ENCODE measurements at regions of chr12 and their contacts with region 1.

Region 1: GRCh38 chr12:21607701-21608100 is 3.1 kb upstream of the GYS2 start:
- DNase-seq: peak in 1 of 2 experiments; percentile 40
- H3K4me3 ChIP-seq: no peak overlapping the region
- H3K4me3 Mint-ChIP-seq: no peak overlapping the region
- H3K27ac Mint-ChIP-seq: no peak overlapping the region
- H3K4me1 ChIP-seq: peaks cover 23% of the 10 kb centered on the region
- H3K4me1 Mint-ChIP-seq: peaks cover 7% of the 10 kb centered on the region
- H3K27me3 ChIP-seq: no peaks in the 10 kb centered on the region
- H3K27me3 Mint-ChIP-seq: no peaks in the 10 kb centered on the region
- CTCF ChIP-seq: peak; percentile 48 to 49

Region 2: DNA sequence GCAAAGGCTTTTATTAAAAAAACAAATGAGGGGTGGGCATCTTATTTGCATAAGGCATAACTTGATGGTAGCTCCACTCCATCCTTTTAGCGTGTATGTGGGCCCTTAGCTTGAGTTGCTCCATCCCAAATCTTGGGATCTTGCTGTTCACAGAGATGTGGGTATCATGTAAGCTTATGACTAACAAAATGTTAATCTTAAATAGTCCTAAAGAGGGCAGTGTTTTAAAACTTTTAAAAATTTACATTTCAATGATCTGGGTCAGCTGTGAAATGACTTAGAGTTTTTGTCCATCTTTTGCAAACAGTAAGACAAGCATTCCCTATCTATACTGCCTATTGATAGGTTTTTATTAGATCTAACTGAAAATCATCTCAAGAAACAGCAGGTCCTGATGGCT is 359.0 kb before region 1 on chr12:
- CTCF ChIA-PET with region 1: no interaction called
- POLR2A ChIA-PET with region 1: no interaction called
- intact Hi-C with region 1: loop called (anchors 10 kb)
- DNase-seq: no peak
- H3K4me3 ChIP-seq: no peak overlapping the region
- H3K4me3 Mint-ChIP-seq: no peak overlapping the region
- H3K27ac Mint-ChIP-seq: no peak overlapping the region
- H3K4me1 ChIP-seq: no peaks in the 10 kb centered on the region
- H3K4me1 Mint-ChIP-seq: no peaks in the 10 kb centered on the region
- H3K27me3 ChIP-seq: no peaks in the 10 kb centered on the region
- H3K27me3 Mint-ChIP-seq: peaks cover 7% of the 10 kb centered on the region
- CTCF ChIP-seq: peak in 1 of 2 experiments; percentile 39

Region 3: GRCh38 chr12:21580748-21581516 is 26.8 kb before region 1 on chr12:
- CTCF ChIA-PET with region 1: no interaction called
- POLR2A ChIA-PET with region 1: no interaction called
- intact Hi-C with region 1: loop called (anchors 2 kb)
- DNase-seq: no peak
- H3K4me3 ChIP-seq: no peak overlapping the region
- H3K4me3 Mint-ChIP-seq: no peak overlapping the region
- H3K27ac Mint-ChIP-seq: peak overlapping the region; percentile 0
- H3K4me1 ChIP-seq: peaks cover 62% of the 10 kb centered on the region
- H3K4me1 Mint-ChIP-seq: peaks cover 57% of the 10 kb centered on the region
- H3K27me3 ChIP-seq: no peaks in the 10 kb centered on the region
- H3K27me3 Mint-ChIP-seq: no peaks in the 10 kb centered on the region
- CTCF ChIP-seq: no peak

Region 4: DNA sequence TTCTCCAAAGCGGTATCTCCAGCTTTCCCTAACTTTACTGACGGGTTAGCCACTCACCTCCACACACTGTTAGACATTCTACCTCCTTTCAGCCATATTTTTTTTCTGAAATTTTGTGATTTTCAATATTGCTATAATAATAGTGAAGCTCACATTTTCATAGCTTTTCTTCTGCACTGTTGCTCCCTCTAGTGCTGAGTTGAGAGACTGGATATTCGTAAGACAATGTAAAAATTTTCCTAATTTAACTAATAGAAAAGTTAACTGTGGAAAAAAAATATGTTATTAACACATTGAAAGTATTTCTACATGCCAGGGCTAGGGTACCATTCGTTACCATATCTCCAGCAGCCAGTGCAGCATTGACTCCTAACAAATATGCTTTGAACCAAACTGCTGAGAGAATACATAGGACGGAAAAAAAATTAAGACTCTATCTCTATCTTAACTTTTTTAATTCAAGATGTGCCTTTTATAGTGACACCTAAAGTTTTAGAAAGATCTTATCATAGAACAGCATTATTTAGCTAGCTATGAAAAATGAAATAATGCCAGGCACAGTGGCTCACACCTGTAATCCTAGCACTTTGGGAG is 382.2 kb after region 1 on chr12:
- CTCF ChIA-PET with region 1: no interaction called
- POLR2A ChIA-PET with region 1: no interaction called
- intact Hi-C with region 1: loop called (anchors 5 kb)
- DNase-seq: peak in 1 of 2 experiments; percentile 46
- H3K4me3 ChIP-seq: no peak overlapping the region
- H3K4me3 Mint-ChIP-seq: no peak overlapping the region
- H3K27ac Mint-ChIP-seq: no peak overlapping the region
- H3K4me1 ChIP-seq: peaks cover 24% of the 10 kb centered on the region
- H3K4me1 Mint-ChIP-seq: peaks cover 35% of the 10 kb centered on the region
- H3K27me3 ChIP-seq: no peaks in the 10 kb centered on the region
- H3K27me3 Mint-ChIP-seq: no peaks in the 10 kb centered on the region
- CTCF ChIP-seq: peak; percentile 83 to 85

Region 5: DNA sequence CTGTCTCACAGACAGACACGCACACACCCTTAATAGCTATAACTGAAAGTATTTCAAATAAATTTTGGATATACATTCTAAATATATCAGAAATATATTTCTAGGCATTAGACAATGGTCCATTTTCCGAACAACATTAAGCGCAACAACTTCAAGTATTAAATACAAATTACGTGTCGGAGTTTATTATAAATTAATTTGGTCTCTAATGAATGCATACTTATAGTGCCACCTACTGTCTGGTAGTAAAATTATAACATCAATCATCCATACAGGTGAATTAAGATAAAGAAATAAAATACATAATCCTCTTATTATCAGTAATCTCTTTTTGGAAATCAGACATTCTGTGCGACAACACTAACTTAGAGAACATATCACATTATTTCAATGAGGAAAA is 411.2 kb after region 1 on chr12:
- CTCF ChIA-PET with region 1: no interaction called
- POLR2A ChIA-PET with region 1: no interaction called
- intact Hi-C with region 1: loop called (anchors 1 kb)
- DNase-seq: no peak
- H3K4me3 ChIP-seq: no peak overlapping the region
- H3K4me3 Mint-ChIP-seq: no peak overlapping the region
- H3K27ac Mint-ChIP-seq: no peak overlapping the region
- H3K4me1 ChIP-seq: no peaks in the 10 kb centered on the region
- H3K4me1 Mint-ChIP-seq: no peaks in the 10 kb centered on the region
- H3K27me3 ChIP-seq: no peaks in the 10 kb centered on the region
- H3K27me3 Mint-ChIP-seq: no peaks in the 10 kb centered on the region
- CTCF ChIP-seq: peak; percentile 34 to 77

Measured in Caco-2 (cell line).